HCT116 (cell line): ENCODE measurements at regions of chr17 and their contacts with region 1.

Region 1: DNA sequence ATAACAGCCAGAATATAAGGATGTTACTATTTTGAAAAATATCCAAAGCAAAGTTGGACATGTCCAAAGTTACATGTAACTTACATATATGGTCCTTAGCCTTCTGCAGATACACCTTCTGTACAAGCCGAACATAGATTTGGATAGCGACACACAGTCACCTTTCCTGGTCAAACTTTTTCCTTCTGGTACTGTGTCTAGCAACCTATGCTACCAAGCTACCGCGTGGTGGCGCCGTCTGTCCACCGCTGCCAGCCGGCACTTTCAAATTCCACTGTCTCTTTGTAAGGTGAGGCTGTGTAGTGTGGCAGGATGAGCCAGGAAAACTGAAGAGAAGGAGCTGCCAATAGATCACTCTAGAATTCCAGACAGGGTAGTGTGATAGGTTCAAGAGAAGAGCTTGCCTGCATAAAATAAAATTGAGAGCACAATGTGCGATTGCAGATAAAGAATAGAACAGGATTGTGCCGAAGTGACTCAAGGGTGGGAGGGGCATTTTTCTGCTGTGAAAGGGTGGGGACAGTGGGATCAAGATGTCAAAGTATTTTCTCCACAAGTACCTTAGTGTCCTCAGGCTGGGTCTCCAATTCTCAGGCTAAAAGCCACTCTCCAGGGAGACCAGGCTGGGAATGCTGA is 366.9 kb downstream of the SLC39A11 start:
- DNase-seq: peak; percentile 66
- ATAC-seq: peak; percentile 83
- H3K4me3 ChIP-seq: no peak overlapping the region
- H3K27ac ChIP-seq: no peak overlapping the region
- H3K4me1 ChIP-seq: peaks cover 0 to 34% of the 10 kb centered on the region in 2 experiments; a peak in 1 of 4 replicates
- H3K27me3 ChIP-seq: no peaks in the 10 kb centered on the region
- CTCF ChIP-seq: peak; percentile 95 to 100 (median 98)
- POLR2A ChIP-seq: no peak
- RAD21 ChIP-seq: peak; percentile 98

Region 2: DNA sequence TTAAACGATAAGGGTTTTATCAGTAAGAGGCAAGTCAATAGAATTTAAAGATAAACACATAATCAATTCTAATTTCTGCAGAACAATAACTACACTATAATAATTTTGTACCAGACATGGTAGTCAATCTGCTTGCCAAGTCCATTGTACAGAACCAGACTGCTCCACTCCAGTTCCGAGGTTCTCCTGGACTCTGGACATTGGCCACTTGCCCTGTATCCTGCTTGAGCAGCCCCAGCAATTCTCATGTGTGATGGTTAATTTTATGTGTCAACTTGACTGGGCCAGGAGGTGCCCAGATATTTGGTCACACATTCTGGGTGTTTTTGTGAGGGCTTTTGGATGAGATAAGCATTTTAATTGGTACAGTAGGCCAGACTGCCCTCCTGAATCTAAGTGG is 17.7 kb before region 1 on chr17:
- CTCF ChIA-PET with region 1: no interaction called
- POLR2A ChIA-PET with region 1: no interaction called
- RAD21 ChIA-PET with region 1: no interaction called
- intact Hi-C with region 1: no loop called
- DNase-seq: no peak
- ATAC-seq: no peak
- H3K4me3 ChIP-seq: no peak overlapping the region
- H3K27ac ChIP-seq: no peak overlapping the region
- H3K4me1 ChIP-seq: peaks cover 10 to 27% of the 10 kb centered on the region in 2 experiments
- H3K27me3 ChIP-seq: no peaks in the 10 kb centered on the region
- CTCF ChIP-seq: no peak
- POLR2A ChIP-seq: no peak
- RAD21 ChIP-seq: no peak

Region 3: DNA sequence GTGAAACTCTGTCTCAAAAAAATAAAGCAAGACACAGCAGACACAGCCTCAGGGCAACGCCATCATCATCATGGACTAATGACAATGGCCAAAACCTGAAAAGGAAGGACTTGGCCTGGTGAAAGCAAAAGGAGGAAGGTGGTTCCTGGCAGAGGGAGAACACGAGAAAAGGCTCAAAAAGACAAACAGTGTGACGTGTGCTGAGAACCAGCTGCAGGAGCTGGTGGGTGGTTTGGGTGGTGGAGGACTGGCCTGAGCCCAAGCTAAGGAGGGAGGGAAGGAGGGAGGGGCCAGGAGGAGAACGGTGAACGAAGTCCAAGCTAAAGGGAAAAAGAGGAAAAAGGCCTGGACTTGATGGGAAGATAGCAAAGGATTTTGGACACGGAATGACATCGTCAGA is 281.9 kb after region 1 on chr17:
- CTCF ChIA-PET with region 1: no interaction called
- POLR2A ChIA-PET with region 1: no interaction called
- RAD21 ChIA-PET with region 1: no interaction called
- intact Hi-C with region 1: no loop called
- DNase-seq: no peak
- ATAC-seq: no peak
- H3K4me3 ChIP-seq: no peak overlapping the region
- H3K27ac ChIP-seq: no peak overlapping the region
- H3K4me1 ChIP-seq: peaks cover 4 to 9% of the 10 kb centered on the region in 2 experiments; a peak in 3 of 4 replicates
- H3K27me3 ChIP-seq: no peaks in the 10 kb centered on the region
- CTCF ChIP-seq: no peak
- POLR2A ChIP-seq: no peak
- RAD21 ChIP-seq: no peak

Region 4: DNA sequence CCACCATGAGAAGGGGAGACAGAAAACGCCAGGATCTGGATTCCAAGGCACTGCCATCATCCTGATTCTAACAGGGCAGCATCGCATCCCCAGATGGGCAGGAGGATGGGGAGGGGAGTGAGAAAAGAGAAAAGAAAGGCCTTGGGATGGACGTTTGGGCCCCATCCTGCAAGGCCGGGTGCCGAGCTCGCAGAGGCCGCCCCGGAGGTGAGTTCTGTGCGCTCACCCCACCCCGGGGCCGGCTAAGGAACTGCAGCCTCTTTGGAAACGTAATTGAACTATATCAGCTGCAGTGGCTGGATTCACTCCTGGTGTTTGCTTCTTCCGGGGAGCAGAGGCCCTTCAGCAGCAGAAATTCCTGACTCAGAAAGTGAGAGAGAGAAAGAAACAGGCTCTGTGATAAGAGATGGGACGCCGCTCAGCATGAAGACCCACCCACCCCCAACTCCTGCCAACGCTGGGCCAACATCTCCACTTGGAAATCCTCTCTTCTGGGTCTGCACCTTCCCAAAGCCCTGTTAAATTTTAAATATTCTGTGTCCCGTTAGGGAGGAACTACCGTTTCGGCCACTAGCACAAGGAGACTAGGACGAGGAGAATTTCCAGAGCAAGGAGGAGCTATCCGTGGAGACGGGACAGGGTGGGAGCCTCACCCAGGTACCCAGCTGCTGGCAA is 430.8 kb after region 1 on chr17:
- CTCF ChIA-PET with region 1: interaction called, 66 read pairs
- POLR2A ChIA-PET with region 1: no interaction called
- RAD21 ChIA-PET with region 1: interaction called, 9 to 31 read pairs
- intact Hi-C with region 1: loop called (anchors 1 kb)
- DNase-seq: peak; percentile 23
- ATAC-seq: peak; percentile 99
- H3K4me3 ChIP-seq: no peak overlapping the region; a peak in 1 of 4 replicates
- H3K27ac ChIP-seq: no peak overlapping the region
- H3K4me1 ChIP-seq: peaks cover 2 to 12% of the 10 kb centered on the region in 2 experiments; a peak in 2 of 4 replicates
- H3K27me3 ChIP-seq: no peaks in the 10 kb centered on the region
- CTCF ChIP-seq: peak; percentile 85 to 97 (median 93)
- POLR2A ChIP-seq: no peak
- RAD21 ChIP-seq: peak; percentile 94

Region 5: GRCh38 chr17:73231841-73232586 is 506.5 kb after region 1 on chr17:
- CTCF ChIA-PET with region 1: interaction called, 7 read pairs
- POLR2A ChIA-PET with region 1: no interaction called
- RAD21 ChIA-PET with region 1: interaction called in 1 of 2 experiments, 3 read pairs
- intact Hi-C with region 1: loop called (anchors 5 kb)
- DNase-seq: peak; percentile 87
- ATAC-seq: peak; percentile 89
- H3K4me3 ChIP-seq: peak overlapping the region; percentile 89 to 92
- H3K27ac ChIP-seq: peak overlapping the region; percentile 78
- H3K4me1 ChIP-seq: peaks cover 30 to 53% of the 10 kb centered on the region in 2 experiments
- H3K27me3 ChIP-seq: no peaks in the 10 kb centered on the region
- CTCF ChIP-seq: peak in 1 of 3 experiments; percentile 34; a peak in 1 of 6 replicates
- POLR2A ChIP-seq: peak; percentile 48
- RAD21 ChIP-seq: no peak

Region 6: GRCh38 chr17:73255671-73256181 is 530.2 kb after region 1 on chr17:
- CTCF ChIA-PET with region 1: interaction called, 10 read pairs
- POLR2A ChIA-PET with region 1: no interaction called
- RAD21 ChIA-PET with region 1: interaction called, 4 read pairs
- intact Hi-C with region 1: no loop called
- DNase-seq: peak; percentile 48
- ATAC-seq: peak; percentile 92
- H3K4me3 ChIP-seq: no peak overlapping the region
- H3K27ac ChIP-seq: no peak overlapping the region
- H3K4me1 ChIP-seq: no peaks in the 10 kb centered on the region
- H3K27me3 ChIP-seq: no peaks in the 10 kb centered on the region
- CTCF ChIP-seq: peak; percentile 97 to 100 (median 98)
- POLR2A ChIP-seq: no peak
- RAD21 ChIP-seq: peak; percentile 100